PC-3 (cell line): ENCODE measurements at regions of chr12 and their contacts with region 1.

Region 1: DNA sequence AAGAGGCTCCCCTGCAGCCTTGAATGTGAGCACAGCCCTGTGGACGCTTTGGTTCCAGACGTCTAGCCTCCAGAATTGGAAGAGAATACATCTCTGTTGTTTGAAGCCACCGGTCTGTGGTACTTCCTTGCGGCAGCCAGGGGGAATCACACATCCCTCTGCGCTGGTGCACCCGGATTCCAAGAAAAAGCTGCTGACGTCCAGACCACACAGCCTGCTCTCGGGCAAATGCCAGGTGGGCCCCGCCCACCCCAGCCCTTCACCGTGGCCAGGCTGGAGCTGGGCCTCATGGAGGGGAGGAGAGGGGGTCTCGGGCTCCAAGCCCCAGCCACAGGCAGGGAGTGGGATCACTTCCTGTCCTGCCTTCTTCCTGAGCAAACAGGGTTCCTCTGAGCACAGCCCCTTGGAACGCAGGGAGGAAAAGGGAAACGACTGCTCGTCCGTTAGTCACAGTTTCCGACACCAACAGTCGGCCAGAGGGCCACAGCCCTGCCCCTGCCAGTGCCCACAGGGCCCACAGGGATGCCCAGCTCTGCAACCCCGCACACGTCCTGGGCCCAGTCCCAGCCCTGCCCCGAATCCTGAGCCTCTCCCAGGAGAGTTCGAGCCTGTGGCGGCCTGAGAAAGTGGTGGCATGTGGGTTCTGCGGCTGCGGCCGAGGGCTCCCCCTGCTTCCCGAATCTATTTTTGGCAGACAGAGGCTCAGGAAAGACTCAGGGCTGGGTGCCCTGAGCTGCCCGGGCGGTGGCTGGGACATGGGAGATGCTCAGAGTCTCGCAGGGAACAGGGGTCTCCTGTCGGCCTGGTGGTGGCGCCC is 85.3 kb downstream of the RFLNA start:
- DNase-seq: peak; percentile 97
- ATAC-seq: peak; percentile 70
- H3K4me3 ChIP-seq: peak overlapping the region; percentile 13; the same call in 1 of the 2 replicates
- H3K27ac ChIP-seq: peak overlapping the region; percentile 86
- H3K4me1 ChIP-seq: peaks cover 64% of the 10 kb centered on the region
- H3K27me3 ChIP-seq: no peaks in the 10 kb centered on the region
- CTCF ChIP-seq: peak; percentile 51

Region 2: DNA sequence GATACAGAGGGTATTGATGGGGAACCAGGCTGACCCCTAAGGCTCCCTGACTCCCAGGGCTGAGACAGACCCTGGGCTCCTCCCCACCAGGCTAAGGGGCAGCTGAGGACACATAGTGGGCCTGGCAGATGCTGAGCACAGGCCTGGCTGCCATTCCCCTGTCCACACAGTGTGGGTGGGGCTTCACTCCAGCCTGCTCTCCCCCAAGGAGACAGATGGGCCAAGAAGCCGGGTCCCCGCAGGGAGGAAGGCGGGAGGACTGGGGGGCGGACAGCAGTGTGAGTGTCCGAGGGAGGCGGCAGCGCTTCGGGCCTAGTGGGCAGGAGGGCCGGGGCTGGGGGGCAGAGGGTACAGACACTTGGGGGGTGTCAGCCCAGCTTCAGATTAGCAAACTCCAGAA is 53.3 kb before region 1 on chr12:
- CTCF ChIA-PET with region 1: interaction called, 13 read pairs
- POLR2A ChIA-PET with region 1: no interaction called
- intact Hi-C with region 1: no loop called
- DNase-seq: no peak
- ATAC-seq: no peak
- H3K4me3 ChIP-seq: no peak overlapping the region
- H3K27ac ChIP-seq: no peak overlapping the region
- H3K4me1 ChIP-seq: no peaks in the 10 kb centered on the region
- H3K27me3 ChIP-seq: no peaks in the 10 kb centered on the region
- CTCF ChIP-seq: no peak

Region 3: GRCh38 chr12:124369055-124369900 is 10.9 kb before region 1 on chr12:
- CTCF ChIA-PET with region 1: no interaction called
- POLR2A ChIA-PET with region 1: no interaction called
- intact Hi-C with region 1: loop called (anchors 1 kb)
- DNase-seq: peak; percentile 81
- ATAC-seq: peak; percentile 74
- H3K4me3 ChIP-seq: no peak overlapping the region
- H3K27ac ChIP-seq: peak overlapping the region; percentile 74
- H3K4me1 ChIP-seq: peaks cover 29% of the 10 kb centered on the region
- H3K27me3 ChIP-seq: no peaks in the 10 kb centered on the region
- CTCF ChIP-seq: 0 out of 2 replicates have a peak, but pooled peaks have one; percentile 2

Region 4: GRCh38 chr12:124399622-124400021 is 19.5 kb after region 1 on chr12:
- CTCF ChIA-PET with region 1: no interaction called
- POLR2A ChIA-PET with region 1: no interaction called
- intact Hi-C with region 1: no loop called
- DNase-seq: peak; percentile 51
- ATAC-seq: no peak
- H3K4me3 ChIP-seq: no peak overlapping the region
- H3K27ac ChIP-seq: no peak overlapping the region
- H3K4me1 ChIP-seq: peaks cover 17% of the 10 kb centered on the region
- H3K27me3 ChIP-seq: no peaks in the 10 kb centered on the region
- CTCF ChIP-seq: peak; percentile 85

Region 5: GRCh38 chr12:124453419-124454351 is 73.5 kb after region 1 on chr12:
- CTCF ChIA-PET with region 1: no interaction called
- POLR2A ChIA-PET with region 1: no interaction called
- intact Hi-C with region 1: loop called (anchors 1 kb)
- DNase-seq: peak; percentile 91
- ATAC-seq: peak; percentile 89
- H3K4me3 ChIP-seq: peak overlapping the region; percentile 13; the same call in 1 of the 2 replicates
- H3K27ac ChIP-seq: peak overlapping the region; percentile 54
- H3K4me1 ChIP-seq: peaks cover 22% of the 10 kb centered on the region
- H3K27me3 ChIP-seq: no peaks in the 10 kb centered on the region
- CTCF ChIP-seq: no peak

Region 6: GRCh38 chr12:124512667-124513296 is 132.6 kb after region 1 on chr12:
- CTCF ChIA-PET with region 1: interaction called, 7 read pairs
- POLR2A ChIA-PET with region 1: no interaction called
- intact Hi-C with region 1: loop called (anchors 2 kb)
- DNase-seq: peak; percentile 98
- ATAC-seq: peak; percentile 64
- H3K4me3 ChIP-seq: peak overlapping the region; percentile 30; the same call in 1 of the 2 replicates
- H3K27ac ChIP-seq: peak overlapping the region; percentile 78
- H3K4me1 ChIP-seq: peaks cover 51% of the 10 kb centered on the region
- H3K27me3 ChIP-seq: no peaks in the 10 kb centered on the region
- CTCF ChIP-seq: no peak

Region 7: GRCh38 chr12:124727264-124727721 is 347.1 kb after region 1 on chr12:
- CTCF ChIA-PET with region 1: interaction called, 10 read pairs
- POLR2A ChIA-PET with region 1: no interaction called
- intact Hi-C with region 1: no loop called
- DNase-seq: peak; percentile 95
- ATAC-seq: peak; percentile 98
- H3K4me3 ChIP-seq: peak overlapping the region; percentile 39; the same call in 1 of the 2 replicates
- H3K27ac ChIP-seq: peak overlapping the region; percentile 77
- H3K4me1 ChIP-seq: peaks cover 23% of the 10 kb centered on the region
- H3K27me3 ChIP-seq: no peaks in the 10 kb centered on the region
- CTCF ChIP-seq: peak; percentile 49; the same call in 1 of the 2 replicates